ENCODE measurements at regions of chr4 and their contacts with region 1.

Region 1: DNA sequence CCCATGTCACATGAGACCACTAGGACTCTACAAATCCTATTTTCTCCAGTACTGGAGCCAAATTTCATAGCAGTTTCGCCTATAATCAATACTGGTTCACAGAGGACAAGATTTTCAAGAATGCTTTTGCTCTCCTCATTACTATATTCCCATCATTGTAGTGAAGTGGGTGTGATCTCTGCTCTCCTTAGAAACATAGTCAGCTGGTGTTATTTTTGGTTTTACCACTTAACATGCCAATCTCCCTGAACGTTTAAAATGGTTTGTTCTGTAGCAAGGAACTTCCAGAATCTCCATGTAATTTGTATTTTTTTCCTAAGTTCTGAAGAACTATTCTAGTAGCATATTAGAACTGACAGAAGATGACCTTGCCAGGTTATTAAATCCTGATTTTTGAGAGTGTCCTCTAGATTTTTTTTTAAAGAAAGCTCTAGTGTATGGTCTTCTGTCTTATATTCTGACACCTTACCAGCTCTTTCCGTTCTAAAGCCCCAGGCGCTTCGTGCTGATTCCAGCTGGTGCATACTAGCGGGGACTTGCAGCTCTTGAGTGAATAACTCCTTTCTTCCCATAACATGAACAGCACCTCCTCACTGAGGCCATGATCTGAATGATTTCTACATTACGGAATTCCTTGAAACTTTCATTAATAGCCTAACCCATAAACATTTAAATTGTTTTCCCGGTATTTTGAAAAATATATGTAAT is 1372.9 kb downstream of the TECRL start:
- DNase-seq: no peak
- ATAC-seq: peak in 6 of 8 donors; percentile 54 to 87 (median 70)
- H3K4me3 ChIP-seq: peak overlapping the region in 2 of 10 donors; percentile 6 to 7
- H3K27ac ChIP-seq: peak overlapping the region in 5 of 10 donors; percentile 25 to 78 (median 39)
- H3K4me1 ChIP-seq: peaks cover 0 to 4% (median 0%) of the 10 kb centered on the region in 9 donors
- H3K27me3 ChIP-seq: no peaks in the 10 kb centered on the region
- CTCF ChIP-seq: no peak

Region 2: GRCh38 chr4:62940229-62940628 is 96.1 kb before region 1 on chr4:
- intact Hi-C with region 1: loop called in 2 of 10 experiments (anchors 5 to 10 kb)
- DNase-seq: no peak
- ATAC-seq: no peak
- H3K4me3 ChIP-seq: no peak overlapping the region
- H3K27ac ChIP-seq: no peak overlapping the region
- H3K4me1 ChIP-seq: no peaks in the 10 kb centered on the region
- H3K27me3 ChIP-seq: no peaks in the 10 kb centered on the region
- CTCF ChIP-seq: no peak

Region 3: DNA sequence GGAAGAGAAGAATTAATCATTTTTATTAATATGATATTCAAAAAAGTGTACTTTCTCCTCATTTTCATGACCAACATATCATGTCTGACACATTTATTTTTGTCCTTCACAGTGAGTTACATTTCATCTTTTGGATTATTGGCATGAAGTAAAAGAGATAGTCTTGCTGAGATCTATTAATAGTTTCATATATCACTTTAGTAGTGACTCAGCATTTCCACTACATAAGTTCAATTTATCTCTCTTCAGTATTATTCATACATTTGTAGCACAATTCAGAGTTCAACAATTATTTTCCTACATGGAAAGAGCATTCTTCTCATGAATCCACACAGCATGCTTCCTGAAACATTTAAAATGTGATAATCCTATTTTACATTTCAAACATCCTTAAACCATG is 88.2 kb before region 1 on chr4:
- intact Hi-C with region 1: loop called in 2 of 10 experiments (anchors 5 to 10 kb)
- DNase-seq: no peak
- ATAC-seq: peak in 3 of 8 donors; percentile 44 to 56 (median 56)
- H3K4me3 ChIP-seq: no peak overlapping the region
- H3K27ac ChIP-seq: peak overlapping the region in 1 of 10 donors; percentile 45
- H3K4me1 ChIP-seq: peaks cover 0 to 7% (median 0%) of the 10 kb centered on the region in 9 donors
- H3K27me3 ChIP-seq: no peaks in the 10 kb centered on the region
- CTCF ChIP-seq: no peak